ENCODE measurements at regions of chr18 and their contacts with region 1.

Region 1: DNA sequence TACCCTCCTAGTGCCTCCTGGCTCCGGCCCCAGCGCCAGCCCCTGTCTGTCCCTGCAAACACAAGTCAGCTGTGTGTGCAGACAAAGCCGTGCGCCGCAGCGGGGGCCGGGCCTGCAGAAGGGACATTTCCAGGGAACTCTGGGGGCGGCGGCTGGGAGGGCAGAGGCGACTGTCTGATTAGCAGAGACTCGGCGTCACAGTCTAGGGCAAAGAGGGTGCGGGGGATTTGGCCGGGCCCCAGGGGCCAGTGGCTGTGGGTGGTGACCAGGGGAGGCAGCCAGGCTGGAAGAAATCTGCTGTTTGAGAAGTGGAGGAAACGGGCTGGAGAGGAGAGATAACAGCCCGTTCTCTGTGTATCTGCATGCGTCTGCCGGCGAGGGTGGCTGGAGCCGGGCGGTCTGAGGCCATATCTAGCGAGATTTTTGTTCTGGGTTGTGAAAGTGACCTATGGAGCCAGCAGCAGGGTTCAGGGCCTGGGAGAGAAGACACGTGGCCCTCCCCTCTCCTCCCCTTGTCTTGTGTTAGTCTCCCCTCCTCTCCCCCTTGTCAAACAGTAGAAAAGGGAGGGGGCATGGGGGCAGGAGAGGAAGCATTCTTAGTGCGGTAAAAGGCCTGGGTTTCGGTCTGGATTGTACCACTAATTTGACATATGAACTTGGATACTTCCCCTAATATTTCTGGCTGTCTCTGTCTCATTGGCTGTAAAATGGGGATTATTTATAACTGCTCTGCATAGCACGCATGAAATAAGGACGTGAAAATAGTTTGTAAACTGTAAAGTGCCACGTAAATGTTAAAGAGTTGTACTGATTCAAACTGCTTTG is 169.4 kb downstream of the SMAD7 start:
- DNase-seq: peak; percentile 97 to 99 (median 99)
- ATAC-seq: peak; percentile 68 to 80 (median 76)
- H3K4me3 ChIP-seq: peak overlapping the region in 2 of 3 donors; percentile 31 to 32
- H3K27ac ChIP-seq: peak overlapping the region; percentile 90 to 96 (median 94)
- H3K4me1 ChIP-seq: peaks cover 0 to 71% (median 26%) of the 10 kb centered on the region in 4 donors
- H3K27me3 ChIP-seq: no peaks in the 10 kb centered on the region
- CTCF ChIP-seq: no peak
- POLR2A ChIP-seq: peak; percentile 63

Region 2: DNA sequence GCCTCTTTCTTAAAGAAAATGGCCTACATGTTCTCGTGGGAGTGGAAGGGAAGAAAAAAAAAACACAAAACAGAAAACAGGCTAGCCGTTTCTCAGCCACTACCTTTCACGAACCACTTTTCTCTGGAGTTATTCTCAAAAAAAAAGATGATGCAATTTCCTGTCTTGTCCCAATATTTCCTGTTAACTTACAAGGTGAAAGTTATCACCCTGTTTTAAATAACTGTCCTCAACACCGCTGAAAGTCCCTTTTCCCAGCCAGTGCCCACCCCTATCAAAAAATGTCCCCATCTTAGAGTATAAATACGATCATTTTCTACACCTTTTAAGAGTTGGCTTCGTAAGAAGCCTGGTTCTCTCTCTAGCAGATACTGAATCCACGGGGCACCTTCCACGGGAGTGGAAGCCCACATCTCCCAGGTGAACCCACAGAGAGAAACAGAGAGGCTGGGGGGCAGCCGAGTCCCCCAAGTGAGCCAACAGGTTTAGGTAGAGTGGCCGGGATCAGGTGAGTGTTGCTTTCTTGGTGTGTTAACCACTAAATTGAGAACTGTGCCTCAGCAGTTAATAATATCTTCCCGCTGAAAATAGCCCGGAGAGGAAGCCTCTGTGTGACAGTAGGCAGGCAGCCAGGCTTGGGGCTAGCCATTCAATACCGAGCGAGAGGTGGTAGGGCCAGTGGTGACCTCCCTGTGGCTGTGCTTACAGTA is 153.5 kb after region 1 on chr18:
- intact Hi-C with region 1: loop called (anchors 10 kb)
- DNase-seq: peak in 2 of 3 donors; percentile 66 to 71
- ATAC-seq: peak; percentile 47 to 67 (median 61)
- H3K4me3 ChIP-seq: peak overlapping the region in 2 of 3 donors; percentile 6 to 7
- H3K27ac ChIP-seq: peak overlapping the region; percentile 43 to 61 (median 60)
- H3K4me1 ChIP-seq: peaks cover 0 to 78% (median 32%) of the 10 kb centered on the region in 4 donors
- H3K27me3 ChIP-seq: no peaks in the 10 kb centered on the region
- CTCF ChIP-seq: no peak
- POLR2A ChIP-seq: no peak

Region 3: DNA sequence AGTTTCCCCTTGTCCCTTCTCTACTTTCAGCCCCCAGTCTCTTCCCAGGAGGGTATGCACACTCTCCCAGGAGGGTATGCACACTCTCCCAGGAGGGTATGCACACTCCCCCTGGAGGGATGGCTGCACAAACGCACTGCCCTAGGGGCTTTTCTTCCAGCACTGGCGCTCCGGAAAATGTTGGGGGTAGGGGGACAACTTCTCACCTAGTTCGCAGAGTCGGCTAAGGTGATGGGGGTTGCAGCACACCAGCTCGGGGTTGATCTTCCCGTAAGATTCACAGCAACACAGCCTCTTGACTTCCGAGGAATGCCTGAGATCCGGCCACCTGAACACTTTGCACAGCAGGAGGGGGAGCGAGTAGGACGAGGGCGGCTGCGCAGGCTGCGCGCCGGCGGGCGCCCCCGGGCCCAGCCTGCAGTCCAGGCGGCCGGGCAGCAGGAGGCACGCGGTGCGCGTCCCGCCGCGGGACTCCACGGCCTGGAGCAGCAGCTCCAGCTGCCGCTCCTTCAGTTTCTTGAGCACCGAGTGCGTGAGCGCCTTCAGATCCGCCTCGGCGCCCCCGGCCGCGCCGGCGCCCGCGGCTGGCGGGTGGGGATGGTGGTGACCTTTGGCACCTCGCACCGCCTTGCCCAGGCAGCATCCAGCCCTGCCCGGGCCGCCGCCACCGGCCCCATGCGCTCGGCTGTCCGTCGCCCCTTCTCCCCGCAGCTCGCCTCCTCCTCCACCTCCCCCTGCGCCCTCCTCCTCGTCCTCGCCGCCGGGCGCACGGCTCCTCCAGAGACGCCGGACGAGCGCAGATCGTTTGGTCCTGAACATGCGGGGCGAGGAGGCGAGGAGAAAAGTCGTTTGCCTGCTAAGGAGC is 168.5 kb after region 1 on chr18:
- intact Hi-C with region 1: loop called in 1 of 2 experiments (anchors 10 kb)
- DNase-seq: peak in 2 of 3 donors; percentile 48 to 72
- ATAC-seq: peak in 3 of 4 donors; percentile 2 to 8 (median 3)
- H3K4me3 ChIP-seq: peak overlapping the region; percentile 77 to 92 (median 79)
- H3K27ac ChIP-seq: peak overlapping the region; percentile 73 to 97 (median 91)
- H3K4me1 ChIP-seq: peaks cover 0 to 31% (median 11%) of the 10 kb centered on the region in 4 donors
- H3K27me3 ChIP-seq: no peaks in the 10 kb centered on the region
- CTCF ChIP-seq: no peak
- POLR2A ChIP-seq: no peak

Measured in right lobe of liver (tissue), 6 donors.